ENCODE measurements at regions of chr11 and their contacts with region 1.

Region 1: GRCh38 chr11:123580557-123581275 is 73.7 kb downstream of the SCN3B start:
- DNase-seq: peak; percentile 30 to 91
- H3K4me3 ChIP-seq: no peak overlapping the region
- CTCF ChIP-seq: peak in 1 of 3 donors; percentile 65
- POLR2A ChIP-seq: no peak

Region 2: DNA sequence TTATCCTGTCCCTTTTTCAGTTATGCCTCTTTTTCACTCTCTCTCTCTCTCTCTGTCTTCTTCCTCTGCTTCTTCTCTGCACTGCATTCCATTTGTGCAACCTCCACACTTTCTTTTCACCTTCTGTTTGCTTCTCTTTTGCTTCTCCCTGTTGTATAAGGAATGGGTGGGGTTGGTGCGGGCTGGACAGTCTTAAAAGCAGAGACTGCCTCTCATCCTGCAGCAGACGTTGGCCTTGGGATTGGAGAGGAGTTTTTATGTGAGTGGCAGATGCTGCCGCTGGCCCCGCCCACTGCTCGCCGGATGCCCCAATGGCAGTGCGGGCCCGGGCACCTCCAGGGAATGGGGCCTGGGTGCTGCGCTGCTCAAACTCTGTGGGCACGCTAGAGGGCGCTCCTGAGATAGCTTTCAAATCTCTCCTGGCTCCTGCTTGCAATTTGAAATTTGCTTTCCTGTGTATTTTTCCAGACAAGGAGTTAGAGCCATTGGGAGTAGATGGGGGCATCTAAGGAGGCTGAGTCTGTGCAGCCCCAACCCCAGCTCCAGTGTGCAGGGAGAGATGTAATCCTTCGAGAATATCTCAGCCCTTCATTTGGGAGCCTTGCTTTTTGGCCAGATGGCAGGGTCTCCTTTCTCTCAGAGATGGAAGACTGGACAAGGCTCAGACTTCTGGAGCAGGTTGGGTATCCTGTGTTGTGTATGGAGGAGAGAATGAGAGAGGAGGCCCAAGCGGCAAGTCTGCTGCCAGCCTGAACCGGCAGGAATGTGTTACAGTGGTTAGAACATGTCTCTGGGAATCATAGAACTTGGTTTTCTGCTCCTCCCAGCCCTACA is 69.5 kb before region 1 on chr11:
- intact Hi-C with region 1: loop called (anchors 2 kb)
- DNase-seq: peak; percentile 65 to 94
- H3K4me3 ChIP-seq: no peak overlapping the region
- CTCF ChIP-seq: no peak
- POLR2A ChIP-seq: no peak

Region 3: DNA sequence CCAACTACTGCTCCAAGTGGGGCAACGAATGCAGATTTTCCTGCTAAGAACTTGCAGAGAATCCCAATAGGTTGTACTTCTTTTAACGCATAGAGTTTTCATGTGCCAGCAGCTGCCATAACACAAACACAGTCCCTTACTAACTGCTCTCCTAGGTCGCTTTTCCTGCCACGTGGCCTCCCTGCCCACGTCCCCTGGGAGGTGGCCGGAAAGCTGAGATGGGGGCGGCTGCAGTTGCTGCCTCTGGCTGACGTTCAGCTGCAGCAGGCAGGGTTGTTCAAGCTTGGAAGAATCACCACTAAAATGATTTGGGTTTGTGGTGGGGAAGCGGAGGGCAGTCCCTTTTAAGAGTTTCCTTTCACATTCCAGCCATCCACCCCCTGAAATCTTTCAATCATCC is 121.4 kb after region 1 on chr11:
- intact Hi-C with region 1: loop called (anchors 5 kb)
- DNase-seq: no peak
- H3K4me3 ChIP-seq: no peak overlapping the region
- CTCF ChIP-seq: no peak
- POLR2A ChIP-seq: no peak